ENCODE measurements at regions of chr7 and their contacts with region 1.

Region 1: DNA sequence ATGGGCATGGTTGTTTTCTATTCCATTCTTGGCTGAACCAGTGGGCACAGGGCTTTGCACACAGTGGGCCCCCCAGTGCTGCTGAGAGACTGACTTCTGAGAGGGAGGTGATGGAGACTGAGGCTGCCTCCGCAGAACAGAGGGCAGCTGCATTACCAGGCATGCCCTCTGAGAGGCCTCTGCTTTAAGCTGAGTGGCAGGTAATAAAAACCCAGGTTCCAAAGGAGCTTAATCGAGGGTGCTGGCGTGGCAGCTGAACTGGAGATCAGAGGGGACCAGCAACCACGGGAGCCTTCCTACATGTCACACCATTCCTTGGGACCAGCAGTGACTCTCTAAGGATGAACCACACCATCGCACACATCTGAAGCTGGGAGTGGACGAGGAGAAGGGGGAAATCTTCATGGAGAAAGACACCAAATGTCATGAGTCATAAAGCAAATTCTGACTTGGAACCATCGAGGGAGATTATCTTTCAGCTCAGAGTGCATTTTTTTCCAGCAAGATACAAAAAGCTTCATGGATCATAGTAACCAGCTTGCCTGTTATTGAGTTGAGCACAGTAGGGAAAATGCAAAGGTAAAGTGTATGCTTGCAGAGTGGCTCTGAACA is 24.6 kb downstream of the HIPK2 start:
- DNase-seq: no peak
- H3K4me3 ChIP-seq: no peak overlapping the region
- H3K27ac ChIP-seq: no peak overlapping the region
- H3K4me1 ChIP-seq: no peaks in the 10 kb centered on the region; a peak in 1 of 7 replicates
- H3K27me3 ChIP-seq: no peaks in the 10 kb centered on the region
- CTCF ChIP-seq: peak; percentile 30 to 55 (median 32)
- EP300 ChIP-seq: no peak
- POLR2A ChIP-seq: no peak
- RAD21 ChIP-seq: peak; percentile 32 to 44; a peak in 2 of 4 replicates

Region 2: GRCh38 chr7:139737221-139738100 is 15.7 kb before region 1 on chr7:
- CTCF ChIA-PET with region 1: interaction called, 10 read pairs
- POLR2A ChIA-PET with region 1: no interaction called
- DNase-seq: no peak
- H3K4me3 ChIP-seq: no peak overlapping the region
- H3K27ac ChIP-seq: no peak overlapping the region
- H3K4me1 ChIP-seq: no peaks in the 10 kb centered on the region
- H3K27me3 ChIP-seq: no peaks in the 10 kb centered on the region
- CTCF ChIP-seq: no peak
- EP300 ChIP-seq: no peak
- POLR2A ChIP-seq: no peak
- RAD21 ChIP-seq: no peak

Region 3: DNA sequence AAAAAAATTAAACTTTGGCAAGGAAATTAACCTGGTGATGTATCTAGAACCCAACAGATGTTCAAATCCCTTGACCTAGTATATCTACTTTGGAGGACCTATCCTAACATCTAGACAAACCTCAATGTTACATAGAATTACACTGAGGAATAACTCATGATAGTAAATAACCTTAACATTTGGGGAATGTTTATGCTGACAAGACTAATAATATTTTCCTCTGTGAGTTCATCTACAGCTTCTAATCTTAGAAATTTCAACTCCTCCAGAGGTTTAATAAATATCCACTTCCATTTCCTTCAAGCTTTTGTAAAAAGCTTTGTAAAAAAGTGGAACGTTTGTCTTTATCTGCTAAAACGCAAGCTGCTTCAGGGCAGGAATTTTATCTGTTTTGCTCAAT is 12.0 kb after region 1 on chr7:
- CTCF ChIA-PET with region 1: interaction called, 17 read pairs
- POLR2A ChIA-PET with region 1: no interaction called
- DNase-seq: no peak
- H3K4me3 ChIP-seq: no peak overlapping the region
- H3K27ac ChIP-seq: no peak overlapping the region
- H3K4me1 ChIP-seq: no peaks in the 10 kb centered on the region; a peak in 2 of 7 replicates
- H3K27me3 ChIP-seq: no peaks in the 10 kb centered on the region; a peak in 1 of 7 replicates
- CTCF ChIP-seq: no peak
- EP300 ChIP-seq: no peak
- POLR2A ChIP-seq: no peak
- RAD21 ChIP-seq: no peak